Endothelial cell of umbilical vein (primary cell): ENCODE measurements at regions of chr12 and their contacts with region 1.

Region 1: GRCh38 chr12:83823431-83823963 is 1089.1 kb downstream of the SLC6A15 start:
- DNase-seq: peak; percentile 1
- H3K4me3 ChIP-seq: no peak overlapping the region
- H3K27ac ChIP-seq: no peak overlapping the region
- H3K4me1 ChIP-seq: no peaks in the 10 kb centered on the region
- H3K27me3 ChIP-seq: no peaks in the 10 kb centered on the region
- CTCF ChIP-seq: peak in 1 of 2 donors; percentile 25
- POLR2A ChIP-seq: no peak

Region 2: DNA sequence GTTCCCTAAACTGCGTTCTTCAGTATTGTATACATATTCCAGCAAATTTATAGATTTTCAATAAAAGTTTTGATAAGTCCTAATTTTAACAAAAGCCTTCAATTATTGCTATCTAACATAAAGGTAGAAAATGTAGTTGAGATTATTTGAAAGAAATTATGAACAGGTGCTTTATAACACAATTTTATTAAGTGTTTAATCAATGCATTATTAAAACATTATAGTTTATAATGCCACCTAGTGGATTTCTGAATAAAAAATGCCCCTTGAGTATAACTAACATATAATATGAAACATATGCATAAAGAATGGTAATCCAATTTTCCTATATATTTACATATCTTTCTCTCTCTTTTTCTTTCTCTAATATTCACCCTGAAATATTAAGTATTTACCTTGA is 573.8 kb after region 1 on chr12:
- CTCF ChIA-PET with region 1: interaction called, 9 read pairs
- POLR2A ChIA-PET with region 1: no interaction called
- dilution Hi-C with region 1: no loop called
- intact Hi-C with region 1: loop called (anchors 1 kb)
- DNase-seq: peak; percentile 2
- H3K4me3 ChIP-seq: no peak overlapping the region
- H3K27ac ChIP-seq: no peak overlapping the region
- H3K4me1 ChIP-seq: no peaks in the 10 kb centered on the region
- H3K27me3 ChIP-seq: no peaks in the 10 kb centered on the region
- CTCF ChIP-seq: no peak
- POLR2A ChIP-seq: no peak

Region 3: DNA sequence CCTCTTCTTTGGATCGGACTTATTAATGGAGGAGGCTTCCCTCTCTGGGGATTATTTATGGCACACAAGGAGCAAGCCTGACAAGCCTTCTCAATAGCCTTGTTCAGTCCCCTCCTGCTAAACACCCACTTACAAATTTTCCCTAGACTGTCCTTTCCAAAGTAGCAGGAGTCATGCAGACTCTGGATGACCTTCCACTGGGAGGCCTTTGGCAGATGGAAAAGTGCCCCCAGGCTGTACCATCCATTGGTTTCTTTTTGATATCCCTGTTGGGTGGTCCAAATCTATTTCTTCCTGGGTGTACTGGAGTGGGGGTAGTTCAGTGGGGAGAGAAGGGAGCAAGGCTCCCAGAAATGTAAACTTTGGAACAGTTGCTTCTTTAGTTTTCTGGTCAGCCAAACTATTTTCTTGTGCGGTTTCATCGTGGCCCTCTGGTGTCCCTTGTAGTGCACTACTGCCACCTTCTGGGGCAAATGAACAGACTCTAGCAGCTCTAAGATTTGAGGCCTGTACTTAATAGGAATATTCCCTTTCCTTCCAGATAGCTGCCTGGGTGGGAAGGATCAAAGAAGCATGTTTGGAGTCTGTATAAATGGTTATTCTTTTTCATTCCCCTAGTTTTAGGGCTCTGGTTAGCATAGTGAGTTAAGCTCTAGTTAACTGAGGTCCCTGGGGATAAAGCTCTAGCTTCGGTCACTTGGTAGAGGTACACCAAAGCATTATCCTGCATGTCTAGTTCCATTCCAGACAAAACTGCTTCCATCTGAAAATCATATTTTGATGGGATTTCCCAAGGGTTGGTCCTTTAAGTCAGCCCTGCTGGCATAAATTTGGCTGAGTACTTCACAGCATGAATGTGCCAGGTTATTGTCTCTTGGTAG is 679.6 kb after region 1 on chr12:
- CTCF ChIA-PET with region 1: interaction called, 15 read pairs
- POLR2A ChIA-PET with region 1: no interaction called
- dilution Hi-C with region 1: no loop called
- intact Hi-C with region 1: loop called (anchors 1 kb)
- DNase-seq: peak; percentile 45
- H3K4me3 ChIP-seq: no peak overlapping the region
- H3K27ac ChIP-seq: no peak overlapping the region
- H3K4me1 ChIP-seq: peaks cover 8% of the 10 kb centered on the region
- H3K27me3 ChIP-seq: no peaks in the 10 kb centered on the region
- CTCF ChIP-seq: peak; percentile 42 to 56
- POLR2A ChIP-seq: no peak

Region 4: DNA sequence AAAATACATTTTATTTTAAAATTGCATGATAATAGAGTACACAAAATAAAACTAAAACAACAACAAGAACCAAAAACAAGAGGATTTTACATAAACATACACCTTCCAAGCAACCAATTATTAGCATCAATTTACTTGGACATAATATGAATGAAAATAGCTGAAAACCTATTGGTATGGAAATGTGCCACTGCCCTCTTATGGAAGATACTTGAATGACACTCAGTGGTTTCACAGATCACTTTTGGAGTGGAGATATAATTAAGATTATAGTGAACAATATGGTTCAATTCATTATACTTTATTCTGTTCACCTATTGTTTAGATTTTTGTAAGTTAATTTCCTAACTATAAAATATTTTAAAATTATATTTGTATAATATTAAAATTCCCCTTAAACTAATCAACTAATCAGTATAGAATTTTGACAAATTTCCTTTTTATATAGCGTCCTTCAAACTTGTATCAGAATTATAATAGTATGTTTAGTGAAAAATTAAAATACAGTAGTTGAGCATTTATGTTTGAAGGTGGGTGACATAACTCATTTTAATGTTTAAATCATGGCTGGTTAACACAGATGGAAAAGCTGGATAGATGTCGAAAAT is 1019.0 kb after region 1 on chr12:
- CTCF ChIA-PET with region 1: interaction called, 15 read pairs
- POLR2A ChIA-PET with region 1: no interaction called
- dilution Hi-C with region 1: no loop called
- intact Hi-C with region 1: loop called (anchors 5 kb)
- DNase-seq: peak; percentile 55
- H3K4me3 ChIP-seq: no peak overlapping the region
- H3K27ac ChIP-seq: no peak overlapping the region
- H3K4me1 ChIP-seq: no peaks in the 10 kb centered on the region
- H3K27me3 ChIP-seq: no peaks in the 10 kb centered on the region
- CTCF ChIP-seq: peak; percentile 38 to 45
- POLR2A ChIP-seq: no peak